Activated naive CD4-positive, alpha-beta T cell treated with anti-CD3 and anti-CD28 coated beads for 36 hours (primary cell): ENCODE measurements at regions of chr3 and their contacts with region 1.

Region 1: GRCh38 chr3:105214575-105214974 is 152.1 kb upstream of the ALCAM start:
- DNase-seq: no peak
- H3K4me3 Mint-ChIP-seq: no peak overlapping the region
- H3K27ac Mint-ChIP-seq: no peak overlapping the region
- H3K4me1 Mint-ChIP-seq: no peaks in the 10 kb centered on the region
- H3K27me3 Mint-ChIP-seq: no peaks in the 10 kb centered on the region

Region 2: DNA sequence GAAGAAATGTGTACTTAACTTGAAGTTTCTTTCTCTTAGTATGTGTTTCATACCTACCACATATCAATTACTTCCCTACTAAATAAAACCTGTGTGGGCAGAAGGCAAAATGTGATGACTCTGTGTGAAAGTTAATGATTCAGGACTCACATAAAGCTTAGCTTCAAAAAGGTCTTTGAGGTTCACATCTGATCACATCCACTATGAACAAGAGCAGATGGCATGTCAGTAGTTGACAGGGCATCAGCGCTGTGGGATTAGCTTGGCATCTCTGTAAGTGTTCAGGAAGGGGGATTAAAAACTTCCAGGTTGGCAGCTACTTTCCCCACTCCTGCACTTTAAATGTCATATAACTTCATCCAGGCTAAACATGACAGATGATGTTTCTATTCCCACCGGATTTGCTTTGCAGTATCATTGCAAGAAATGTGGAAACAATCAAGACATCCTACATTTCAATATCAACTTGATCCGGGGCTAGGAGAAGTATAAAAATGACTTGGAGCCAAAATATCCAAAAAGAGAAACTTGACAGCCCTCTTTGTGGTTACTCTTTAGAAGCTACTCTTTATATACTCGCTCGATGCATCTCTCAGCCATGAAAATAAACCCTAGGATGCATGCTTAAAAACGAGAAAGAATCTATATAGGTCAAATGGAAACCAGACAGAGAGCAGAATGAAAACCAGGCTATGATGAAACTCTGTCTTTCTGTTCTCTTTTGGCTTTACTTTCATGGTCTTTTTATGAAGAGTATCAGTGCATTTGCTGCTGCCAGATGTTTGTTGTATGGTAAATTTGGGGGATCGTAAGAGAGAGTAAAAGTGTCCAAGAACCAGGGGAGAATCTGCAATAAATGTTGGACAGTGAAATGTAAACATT is 121.0 kb before region 1 on chr3:
- CTCF ChIA-PET with region 1: no interaction called
- intact Hi-C with region 1: no loop called
- DNase-seq: no peak
- H3K4me3 Mint-ChIP-seq: no peak overlapping the region
- H3K27ac Mint-ChIP-seq: no peak overlapping the region
- H3K4me1 Mint-ChIP-seq: no peaks in the 10 kb centered on the region
- H3K27me3 Mint-ChIP-seq: no peaks in the 10 kb centered on the region

Region 3: GRCh38 chr3:105232553-105232952 is 18.0 kb after region 1 on chr3:
- CTCF ChIA-PET with region 1: no interaction called
- intact Hi-C with region 1: no loop called
- DNase-seq: no peak
- H3K4me3 Mint-ChIP-seq: no peak overlapping the region
- H3K27ac Mint-ChIP-seq: no peak overlapping the region
- H3K4me1 Mint-ChIP-seq: no peaks in the 10 kb centered on the region
- H3K27me3 Mint-ChIP-seq: peaks cover 2% of the 10 kb centered on the region

Region 4: GRCh38 chr3:105473521-105474223 is 259.1 kb after region 1 on chr3:
- CTCF ChIA-PET with region 1: no interaction called
- intact Hi-C with region 1: no loop called
- DNase-seq: no peak
- H3K4me3 Mint-ChIP-seq: no peak overlapping the region
- H3K27ac Mint-ChIP-seq: no peak overlapping the region
- H3K4me1 Mint-ChIP-seq: no peaks in the 10 kb centered on the region
- H3K27me3 Mint-ChIP-seq: peaks cover 3% of the 10 kb centered on the region

Region 5: DNA sequence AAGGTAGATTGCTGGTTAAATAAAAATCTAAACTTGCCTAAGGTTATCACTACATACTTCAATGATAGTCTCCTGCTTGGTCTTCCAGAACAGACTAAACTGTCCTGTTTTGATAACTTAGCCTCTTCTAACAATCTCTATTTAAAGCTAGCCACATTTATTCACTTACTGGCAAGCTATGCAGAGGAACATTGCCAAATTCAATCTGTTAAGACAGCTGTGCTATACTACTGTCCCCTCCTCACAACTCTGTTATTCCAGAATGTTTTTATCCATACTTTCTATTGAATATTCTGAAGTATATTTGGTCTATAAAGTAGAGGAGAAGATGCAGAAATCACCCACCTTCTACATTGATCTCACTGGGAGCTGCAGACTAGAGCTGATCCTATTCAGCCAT is 1568.7 kb after region 1 on chr3:
- CTCF ChIA-PET with region 1: no interaction called
- intact Hi-C with region 1: loop called (anchors 5 kb)
- DNase-seq: no peak
- H3K4me3 Mint-ChIP-seq: no peak overlapping the region
- H3K27ac Mint-ChIP-seq: no peak overlapping the region
- H3K4me1 Mint-ChIP-seq: no peaks in the 10 kb centered on the region
- H3K27me3 Mint-ChIP-seq: no peaks in the 10 kb centered on the region